CD4-positive, alpha-beta T cell (primary cell): ENCODE measurements at regions of chr17 and their contacts with region 1.

Region 1: DNA sequence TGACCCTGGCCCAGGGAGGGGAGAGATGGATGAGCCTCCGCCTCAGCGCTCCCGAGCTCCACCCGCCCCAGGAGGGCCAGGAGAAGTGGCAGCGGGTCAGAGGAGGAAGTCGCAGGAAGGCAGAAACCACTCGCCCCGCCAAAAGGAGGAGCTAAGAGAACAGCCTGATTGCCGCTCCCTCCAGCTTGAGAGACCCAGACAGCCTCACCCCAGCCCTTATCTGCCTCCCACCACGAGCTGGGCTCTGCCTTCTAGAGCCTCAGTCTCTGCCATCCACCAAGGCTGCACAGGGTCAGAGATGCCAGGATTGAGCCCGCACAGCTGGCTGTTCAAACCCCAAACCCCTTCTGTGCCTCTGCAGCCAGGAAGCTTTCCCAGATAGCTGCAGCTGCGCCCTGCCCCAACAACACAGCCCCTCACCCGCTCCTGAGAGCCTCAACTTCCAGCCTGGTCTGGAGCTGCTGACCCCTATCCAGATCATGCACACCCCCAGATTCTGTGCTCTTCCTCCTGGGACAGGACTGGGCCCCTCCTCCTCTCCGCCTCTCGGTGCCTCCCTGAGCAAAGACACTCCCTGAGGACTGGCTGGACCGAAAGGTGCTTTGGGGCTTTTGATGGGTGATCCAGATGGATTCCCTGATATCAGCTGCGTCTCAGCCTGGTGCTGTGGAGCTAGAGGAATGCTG is 1.0 kb upstream of the ATP2A3 start:
- DNase-seq: peak; percentile 44 to 81 (median 58)
- ATAC-seq: peak; percentile 58
- H3K4me3 ChIP-seq: peak overlapping the region; percentile 65
- H3K4me3 Mint-ChIP-seq: peak overlapping the region; percentile 92
- H3K27ac ChIP-seq: peak overlapping the region; percentile 57 to 84
- H3K27ac Mint-ChIP-seq: peak overlapping the region; percentile 92
- H3K4me1 ChIP-seq: peaks cover 52% of the 10 kb centered on the region
- H3K4me1 Mint-ChIP-seq: peaks cover 51% of the 10 kb centered on the region
- H3K27me3 ChIP-seq: no peaks in the 10 kb centered on the region
- H3K27me3 Mint-ChIP-seq: no peaks in the 10 kb centered on the region
- CTCF ChIP-seq: no peak

Region 2: GRCh38 chr17:3893003-3893719 is 72.1 kb before region 1 on chr17 and contains the start of gene CAMKK1:
- CTCF ChIA-PET with region 1: interaction called, 3 read pairs
- POLR2A ChIA-PET with region 1: interaction called, 4 read pairs
- intact Hi-C with region 1: loop called in 1 of 2 experiments (anchors 1 kb)
- DNase-seq: peak; percentile 70 to 94 (median 86)
- ATAC-seq: peak; percentile 66
- H3K4me3 ChIP-seq: peak within 1 kb of the TSS; percentile 58
- H3K4me3 Mint-ChIP-seq: peak within 1 kb of the TSS; percentile 91
- H3K27ac ChIP-seq: peak within 1 kb of the TSS; percentile 15 to 46
- H3K27ac Mint-ChIP-seq: peak within 1 kb of the TSS; percentile 94
- H3K4me1 ChIP-seq: peaks cover 34% of the 10 kb centered on the region
- H3K4me1 Mint-ChIP-seq: peaks cover 37% of the 10 kb centered on the region
- H3K27me3 ChIP-seq: no peaks in the 10 kb centered on the region
- H3K27me3 Mint-ChIP-seq: no peaks in the 10 kb centered on the region
- CTCF ChIP-seq: no peak
- total RNA-seq, gene CAMKK1: 4.8 to 4.9 TPM

Region 3: GRCh38 chr17:3913531-3914311 is 51.5 kb before region 1 on chr17:
- CTCF ChIA-PET with region 1: interaction called, 9 read pairs
- POLR2A ChIA-PET with region 1: interaction called, 13 read pairs
- intact Hi-C with region 1: loop called (anchors 2 to 5 kb)
- DNase-seq: peak; percentile 68 to 89 (median 76)
- ATAC-seq: peak; percentile 61
- H3K4me3 ChIP-seq: no peak overlapping the region
- H3K4me3 Mint-ChIP-seq: no peak overlapping the region
- H3K27ac ChIP-seq: no peak overlapping the region
- H3K27ac Mint-ChIP-seq: peak overlapping the region; percentile 78
- H3K4me1 ChIP-seq: peaks cover 55% of the 10 kb centered on the region
- H3K4me1 Mint-ChIP-seq: peaks cover 50% of the 10 kb centered on the region
- H3K27me3 ChIP-seq: no peaks in the 10 kb centered on the region
- H3K27me3 Mint-ChIP-seq: no peaks in the 10 kb centered on the region
- CTCF ChIP-seq: peak; percentile 98

Region 4: DNA sequence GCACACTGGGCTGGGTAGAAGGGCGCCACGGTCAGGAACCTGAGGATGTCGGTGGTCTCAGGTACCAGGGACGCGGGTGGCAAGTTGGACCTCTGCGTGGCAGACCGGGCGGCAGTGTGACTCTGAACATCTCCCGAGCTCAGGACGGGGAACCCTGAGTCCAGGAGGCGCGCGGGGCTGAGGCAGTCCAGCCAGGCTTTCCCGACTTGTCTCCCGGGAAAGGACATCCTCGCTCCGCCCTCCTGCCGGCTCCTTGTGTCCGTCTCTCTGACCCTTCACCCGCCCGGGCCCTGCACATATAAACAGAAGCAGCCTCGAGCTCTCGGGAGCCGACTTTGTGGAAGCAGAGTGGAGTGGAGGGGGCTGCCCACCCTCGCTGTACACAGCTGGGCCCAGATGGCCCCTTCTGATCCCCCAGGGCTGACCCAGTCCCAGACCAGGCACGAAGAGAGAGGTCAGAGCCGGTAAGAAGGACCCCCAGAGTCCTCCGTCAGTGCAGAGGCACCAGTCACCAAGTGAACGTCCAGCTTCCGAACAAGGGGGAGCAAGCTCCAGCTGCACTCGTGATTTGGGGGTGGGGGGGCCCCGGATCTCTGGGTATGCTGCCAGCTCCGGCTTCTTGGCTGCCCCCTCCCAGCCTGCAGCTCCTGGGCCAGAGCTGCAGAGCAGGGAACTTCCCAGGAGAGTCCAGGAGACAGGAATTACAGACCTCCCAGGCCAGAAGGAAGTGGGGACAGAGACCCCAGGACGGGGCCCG is 40.6 kb before region 1 on chr17:
- CTCF ChIA-PET with region 1: no interaction called
- POLR2A ChIA-PET with region 1: interaction called, 3 read pairs
- intact Hi-C with region 1: loop called in 1 of 2 experiments (anchors 1 kb)
- DNase-seq: no peak
- ATAC-seq: no peak
- H3K4me3 ChIP-seq: no peak overlapping the region
- H3K4me3 Mint-ChIP-seq: no peak overlapping the region
- H3K27ac ChIP-seq: no peak overlapping the region
- H3K27ac Mint-ChIP-seq: peak overlapping the region; percentile 62
- H3K4me1 ChIP-seq: no peaks in the 10 kb centered on the region
- H3K4me1 Mint-ChIP-seq: no peaks in the 10 kb centered on the region
- H3K27me3 ChIP-seq: no peaks in the 10 kb centered on the region
- H3K27me3 Mint-ChIP-seq: no peaks in the 10 kb centered on the region
- CTCF ChIP-seq: no peak

Region 5: GRCh38 chr17:3944485-3945388 is 20.5 kb before region 1 on chr17:
- CTCF ChIA-PET with region 1: interaction called, 3 read pairs
- POLR2A ChIA-PET with region 1: interaction called, 16 read pairs
- intact Hi-C with region 1: loop called in 1 of 2 experiments (anchors 2 kb)
- DNase-seq: peak in 10 of 14 experiments; percentile 15 to 68 (median 38)
- ATAC-seq: peak; percentile 96
- H3K4me3 ChIP-seq: no peak overlapping the region
- H3K4me3 Mint-ChIP-seq: no peak overlapping the region
- H3K27ac ChIP-seq: no peak overlapping the region
- H3K27ac Mint-ChIP-seq: no peak overlapping the region
- H3K4me1 ChIP-seq: no peaks in the 10 kb centered on the region
- H3K4me1 Mint-ChIP-seq: no peaks in the 10 kb centered on the region
- H3K27me3 ChIP-seq: no peaks in the 10 kb centered on the region
- H3K27me3 Mint-ChIP-seq: no peaks in the 10 kb centered on the region
- CTCF ChIP-seq: no peak

Region 6: DNA sequence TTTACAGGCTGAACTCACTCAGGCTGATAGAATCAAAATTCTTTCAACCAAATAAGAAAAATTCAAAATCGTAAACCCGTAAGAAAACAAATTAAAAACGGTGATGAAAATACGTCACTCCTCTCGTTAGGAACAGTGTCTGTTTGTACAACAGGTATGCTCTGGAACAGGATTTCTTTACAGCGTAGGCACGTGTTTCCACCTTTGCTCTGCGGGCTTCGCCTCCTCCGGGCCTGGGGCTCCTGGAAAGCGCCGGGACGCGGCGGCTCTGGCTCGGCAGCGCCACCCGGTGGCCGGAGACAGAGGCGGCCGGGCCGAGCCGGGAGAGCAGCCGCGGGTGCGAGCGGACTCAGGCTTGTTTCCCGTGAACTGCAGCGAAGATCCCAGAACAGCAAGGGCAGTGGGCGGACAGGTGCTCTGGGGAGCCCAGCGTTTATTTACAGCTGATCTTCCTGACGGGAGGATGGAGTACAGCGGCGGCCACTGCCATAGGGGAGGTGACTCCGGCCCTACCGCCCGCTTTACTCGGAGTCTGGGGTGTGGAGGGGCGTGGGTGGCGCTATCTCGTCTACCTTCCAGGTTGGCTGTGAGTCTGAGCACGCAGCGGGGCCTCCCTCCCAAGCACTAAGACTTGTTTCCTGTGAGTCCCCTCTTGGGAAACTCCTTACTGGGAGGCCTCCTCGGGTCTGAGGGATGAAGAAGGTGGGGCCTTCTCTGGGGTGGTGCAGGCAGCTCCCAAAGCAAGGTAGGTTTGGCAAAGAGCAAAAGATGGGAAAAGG is 39.4 kb after region 1 on chr17:
- CTCF ChIA-PET with region 1: interaction called, 9 read pairs
- POLR2A ChIA-PET with region 1: interaction called, 5 read pairs
- intact Hi-C with region 1: loop called (anchors 2 kb)
- DNase-seq: peak; percentile 34 to 81 (median 54)
- ATAC-seq: peak; percentile 93
- H3K4me3 ChIP-seq: no peak overlapping the region
- H3K4me3 Mint-ChIP-seq: no peak overlapping the region
- H3K27ac ChIP-seq: no peak overlapping the region
- H3K27ac Mint-ChIP-seq: no peak overlapping the region
- H3K4me1 ChIP-seq: peaks cover 9% of the 10 kb centered on the region
- H3K4me1 Mint-ChIP-seq: peaks cover 8% of the 10 kb centered on the region
- H3K27me3 ChIP-seq: no peaks in the 10 kb centered on the region
- H3K27me3 Mint-ChIP-seq: no peaks in the 10 kb centered on the region
- CTCF ChIP-seq: peak; percentile 97

Region 7: DNA sequence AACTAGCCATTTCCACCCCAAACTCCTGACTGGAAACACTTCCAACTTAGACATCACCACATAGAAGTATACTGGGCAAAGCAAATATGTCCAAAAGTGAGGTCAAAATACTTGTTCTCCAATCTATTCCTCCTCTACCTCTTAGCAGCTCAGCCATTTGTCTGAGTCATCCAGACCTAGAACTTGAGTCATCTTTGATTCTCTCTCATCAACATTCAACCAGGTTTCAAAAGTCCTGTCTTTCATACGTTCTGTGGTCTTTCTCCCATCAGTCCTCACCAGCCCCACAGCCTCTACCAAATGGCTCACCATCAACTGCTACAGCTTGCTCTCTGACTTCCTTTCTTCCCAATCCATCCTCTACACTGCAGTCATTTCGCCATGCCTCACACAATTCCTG is 291.7 kb after region 1 on chr17:
- CTCF ChIA-PET with region 1: no interaction called
- POLR2A ChIA-PET with region 1: no interaction called
- intact Hi-C with region 1: no loop called
- DNase-seq: no peak
- ATAC-seq: no peak
- H3K4me3 ChIP-seq: no peak overlapping the region
- H3K4me3 Mint-ChIP-seq: no peak overlapping the region
- H3K27ac ChIP-seq: no peak overlapping the region
- H3K27ac Mint-ChIP-seq: peak overlapping the region; percentile 12
- H3K4me1 ChIP-seq: peaks cover 11% of the 10 kb centered on the region
- H3K4me1 Mint-ChIP-seq: peaks cover 59% of the 10 kb centered on the region
- H3K27me3 ChIP-seq: no peaks in the 10 kb centered on the region
- H3K27me3 Mint-ChIP-seq: no peaks in the 10 kb centered on the region
- CTCF ChIP-seq: no peak